ENCODE measurements at regions of chr18 and their contacts with region 1.

Region 1: GRCh38 chr18:5546660-5547059 is 2.9 kb upstream of the EPB41L3 start:
- DNase-seq: peak; percentile 62 to 75 (median 74)
- H3K4me3 ChIP-seq: no peak overlapping the region
- H3K27ac ChIP-seq: no peak overlapping the region
- H3K4me1 ChIP-seq: peaks cover 0 to 18% (median 6%) of the 10 kb centered on the region in 4 experiments
- H3K27me3 ChIP-seq: peaks cover 0 to 6% (median 2%) of the 10 kb centered on the region in 5 experiments

Region 2: GRCh38 chr18:5456577-5457463 is 89.8 kb before region 1 on chr18:
- CTCF ChIA-PET with region 1: interaction called, 13 read pairs
- POLR2A ChIA-PET with region 1: interaction called, 4 read pairs
- DNase-seq: peak in 2 of 3 donors; percentile 38 to 47
- H3K4me3 ChIP-seq: peak overlapping the region in 4 of 7 experiments; percentile 12 to 75 (median 50)
- H3K27ac ChIP-seq: peak overlapping the region in 1 of 2 experiments; percentile 41
- H3K4me1 ChIP-seq: peaks cover 8 to 22% (median 14%) of the 10 kb centered on the region in 4 experiments
- H3K27me3 ChIP-seq: no peaks in the 10 kb centered on the region